PC-9 (cell line): ENCODE measurements at regions of chr1 and their contacts with region 1.

Region 1: GRCh38 chr1:156385534-156386031 is 16.6 kb downstream of the RHBG start:
- DNase-seq: peak in 1 of 2 experiments; percentile 45
- H3K4me3 ChIP-seq: no peak overlapping the region
- H3K27ac ChIP-seq: no peak overlapping the region
- H3K4me1 ChIP-seq: no peaks in the 10 kb centered on the region
- H3K27me3 ChIP-seq: no peaks in the 10 kb centered on the region
- CTCF ChIP-seq: peak; percentile 100

Region 2: DNA sequence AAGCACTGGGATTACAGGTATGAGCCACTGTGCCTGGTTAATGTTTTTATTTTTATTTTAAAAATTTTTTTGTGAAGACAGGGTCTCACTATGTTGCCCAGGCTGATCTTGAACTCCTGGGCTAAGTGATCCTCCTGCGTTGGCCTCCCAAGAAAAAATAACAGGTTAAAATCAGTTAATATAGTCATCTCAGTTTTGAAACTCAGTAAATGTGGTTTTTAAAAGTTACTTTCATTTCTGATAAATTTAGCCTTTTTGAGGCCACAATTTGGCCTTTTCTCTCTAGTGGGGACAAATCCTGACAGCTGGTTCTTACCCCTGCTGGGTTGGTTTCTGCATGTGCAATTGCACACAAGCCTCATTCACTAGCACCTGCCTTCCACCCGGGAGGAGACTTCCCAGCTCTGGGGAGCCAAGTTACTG is 159.5 kb before region 1 on chr1:
- CTCF ChIA-PET with region 1: no interaction called
- POLR2A ChIA-PET with region 1: no interaction called
- intact Hi-C with region 1: no loop called
- DNase-seq: no peak
- H3K4me3 ChIP-seq: no peak overlapping the region
- H3K27ac ChIP-seq: no peak overlapping the region
- H3K4me1 ChIP-seq: 0 out of 2 replicates have a peak, but pooled peaks cover 5% of the 10 kb centered on the region
- H3K27me3 ChIP-seq: no peaks in the 10 kb centered on the region
- CTCF ChIP-seq: no peak

Region 3: GRCh38 chr1:156338180-156338973 is 47.2 kb before region 1 on chr1 and contains the starts of genes CCT3 and TSACC:
- CTCF ChIA-PET with region 1: interaction called, 21 read pairs
- POLR2A ChIA-PET with region 1: no interaction called
- intact Hi-C with region 1: no loop called
- DNase-seq: peak; percentile 97 to 99
- H3K4me3 ChIP-seq: peak within 1 kb of the TSS; percentile 100
- H3K27ac ChIP-seq: peak within 1 kb of the TSS; percentile 63
- H3K4me1 ChIP-seq: peaks cover 18% of the 10 kb centered on the region
- H3K27me3 ChIP-seq: no peaks in the 10 kb centered on the region
- CTCF ChIP-seq: no peak; the same call in 1 of the 2 replicates
- total RNA-seq, gene CCT3: 272 and 317 TPM in 2 replicates
- total RNA-seq, gene TSACC: 0.75 and 1.3 TPM in 2 replicates

Region 4: GRCh38 chr1:156436142-156437036 is 50.8 kb after region 1 on chr1:
- CTCF ChIA-PET with region 1: interaction called, 51 read pairs
- POLR2A ChIA-PET with region 1: no interaction called
- intact Hi-C with region 1: no loop called
- DNase-seq: no peak
- H3K4me3 ChIP-seq: no peak overlapping the region
- H3K27ac ChIP-seq: no peak overlapping the region
- H3K4me1 ChIP-seq: no peaks in the 10 kb centered on the region
- H3K27me3 ChIP-seq: peaks cover 73% of the 10 kb centered on the region
- CTCF ChIP-seq: no peak

Region 5: DNA sequence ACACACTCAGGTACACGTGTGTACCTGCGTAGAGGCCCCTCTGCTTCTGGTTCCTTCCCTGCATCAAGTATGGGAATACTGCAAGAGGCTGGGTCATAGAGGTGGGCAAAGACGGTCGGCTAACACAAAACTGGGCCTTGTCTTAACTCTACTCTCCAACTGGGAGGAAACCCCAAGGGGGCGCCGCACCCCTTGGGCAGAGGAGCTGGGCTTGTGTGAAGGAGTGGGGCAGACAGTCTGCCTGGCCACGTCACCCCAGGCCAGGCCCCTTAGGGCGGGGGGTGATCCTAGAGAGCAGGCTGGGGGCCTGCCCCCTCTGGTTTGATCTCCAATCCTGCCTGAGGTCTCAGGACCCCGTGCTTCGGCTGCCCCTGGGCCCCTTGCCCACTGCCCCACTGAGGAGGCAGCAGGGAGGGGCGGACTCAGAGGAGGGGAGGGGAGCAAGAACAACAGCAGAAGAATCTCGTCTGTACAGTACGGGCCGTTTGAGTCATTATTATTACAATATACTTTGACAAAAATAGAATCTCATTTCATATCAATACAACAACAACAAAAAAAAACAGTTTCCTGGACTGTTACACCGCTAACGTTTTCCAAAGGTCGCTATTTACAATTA is 80.3 kb after region 1 on chr1:
- CTCF ChIA-PET with region 1: interaction called, 15 read pairs
- POLR2A ChIA-PET with region 1: no interaction called
- intact Hi-C with region 1: no loop called
- DNase-seq: peak in 1 of 2 experiments; percentile 18
- H3K4me3 ChIP-seq: no peak overlapping the region
- H3K27ac ChIP-seq: no peak overlapping the region
- H3K4me1 ChIP-seq: peaks cover 24% of the 10 kb centered on the region
- H3K27me3 ChIP-seq: no peaks in the 10 kb centered on the region
- CTCF ChIP-seq: peak; percentile 32; the same call in 1 of the 2 replicates

Region 6: GRCh38 chr1:156608036-156608674 is 222.6 kb after region 1 on chr1:
- CTCF ChIA-PET with region 1: interaction called, 10 read pairs
- POLR2A ChIA-PET with region 1: no interaction called
- intact Hi-C with region 1: loop called (anchors 1 kb)
- DNase-seq: peak; percentile 43 to 62
- H3K4me3 ChIP-seq: no peak overlapping the region; the same call in 1 of the 2 replicates
- H3K27ac ChIP-seq: no peak overlapping the region
- H3K4me1 ChIP-seq: peaks cover 18% of the 10 kb centered on the region; the same call in 1 of the 2 replicates
- H3K27me3 ChIP-seq: peaks cover 16% of the 10 kb centered on the region; the same call in 1 of the 2 replicates
- CTCF ChIP-seq: peak; percentile 84

Region 7: DNA sequence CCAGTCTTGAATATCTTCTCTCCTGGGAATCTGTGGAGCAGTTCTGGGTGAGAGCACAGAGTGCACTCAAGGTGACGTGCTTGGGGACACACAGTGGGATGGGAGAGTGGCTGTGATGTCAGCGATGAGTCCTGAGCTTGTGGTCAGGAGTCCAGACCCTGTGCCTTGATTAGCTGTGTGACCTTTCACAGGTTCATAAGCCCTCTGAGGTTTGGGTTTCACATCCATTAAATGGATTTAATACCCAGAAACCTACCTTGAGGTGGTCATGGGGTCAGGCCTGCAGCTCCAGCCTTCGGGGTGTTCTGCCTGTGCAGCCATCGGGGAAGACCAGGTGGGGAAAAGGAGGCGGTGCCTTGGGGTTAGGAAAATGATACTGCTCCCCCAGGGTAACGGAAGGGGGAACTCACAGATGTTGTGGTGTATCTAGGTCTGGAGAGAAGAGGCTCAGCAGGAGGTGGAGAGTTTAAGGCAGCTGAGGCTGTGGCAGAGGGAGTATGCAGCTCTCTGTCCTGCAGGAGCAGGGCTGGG is 791.1 kb after region 1 on chr1:
- CTCF ChIA-PET with region 1: no interaction called
- POLR2A ChIA-PET with region 1: no interaction called
- intact Hi-C with region 1: no loop called
- DNase-seq: no peak
- H3K4me3 ChIP-seq: no peak overlapping the region
- H3K27ac ChIP-seq: no peak overlapping the region
- H3K4me1 ChIP-seq: no peaks in the 10 kb centered on the region
- H3K27me3 ChIP-seq: peaks cover 69% of the 10 kb centered on the region; the same call in 1 of the 2 replicates
- CTCF ChIP-seq: no peak